Activated B cell treated with CpG ODN at 0.5 μM for 24 hours (primary cell): ENCODE measurements at regions of chr17 and their contacts with region 1.

Region 1: DNA sequence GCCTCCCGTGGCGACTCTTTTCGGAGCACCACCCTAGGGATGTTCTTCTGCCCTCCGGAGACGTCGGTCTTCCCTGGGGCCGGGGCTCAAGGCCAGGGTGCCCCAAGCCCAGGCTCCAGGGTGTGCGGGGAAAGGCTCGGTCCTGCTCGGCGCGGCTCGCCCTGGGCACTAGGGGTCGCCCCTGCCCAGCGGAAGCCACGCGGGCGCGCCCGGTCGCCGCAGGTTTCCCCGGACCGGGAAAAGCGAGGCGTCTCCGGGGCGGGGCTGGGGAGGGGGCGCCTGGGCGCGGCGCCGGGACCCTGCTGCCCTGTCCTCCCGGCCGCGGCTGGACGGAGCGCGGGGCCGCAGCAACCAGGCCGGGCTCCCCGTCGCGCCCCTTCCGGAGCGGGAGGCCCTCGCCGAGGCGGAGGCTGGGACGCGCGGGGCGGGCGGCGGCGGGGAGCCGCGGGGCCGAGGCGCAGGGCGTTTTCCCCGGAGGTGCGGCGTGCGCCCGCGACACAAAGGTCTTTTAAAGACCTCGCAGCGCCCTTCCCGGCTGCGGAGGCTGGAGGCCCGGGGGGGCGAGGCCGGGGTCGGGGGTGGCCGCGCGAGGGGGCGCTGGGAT is 76.4 kb downstream of the MRC2 start:
- DNase-seq: peak; percentile 81
- ATAC-seq: peak; percentile 95
- H3K4me3 Mint-ChIP-seq: peak overlapping the region; percentile 60
- H3K27ac Mint-ChIP-seq: no peak overlapping the region
- H3K4me1 Mint-ChIP-seq: peaks cover 10% of the 10 kb centered on the region
- H3K27me3 Mint-ChIP-seq: peaks cover 11% of the 10 kb centered on the region
- CTCF ChIP-seq: no peak

Region 2: GRCh38 chr17:62388856-62389255 is 315.0 kb before region 1 on chr17:
- CTCF ChIA-PET with region 1: no interaction called
- POLR2A ChIA-PET with region 1: no interaction called
- intact Hi-C with region 1: no loop called
- DNase-seq: no peak
- ATAC-seq: no peak
- H3K4me3 Mint-ChIP-seq: no peak overlapping the region
- H3K27ac Mint-ChIP-seq: no peak overlapping the region
- H3K4me1 Mint-ChIP-seq: no peaks in the 10 kb centered on the region
- H3K27me3 Mint-ChIP-seq: peaks cover 14% of the 10 kb centered on the region
- CTCF ChIP-seq: no peak

Region 3: DNA sequence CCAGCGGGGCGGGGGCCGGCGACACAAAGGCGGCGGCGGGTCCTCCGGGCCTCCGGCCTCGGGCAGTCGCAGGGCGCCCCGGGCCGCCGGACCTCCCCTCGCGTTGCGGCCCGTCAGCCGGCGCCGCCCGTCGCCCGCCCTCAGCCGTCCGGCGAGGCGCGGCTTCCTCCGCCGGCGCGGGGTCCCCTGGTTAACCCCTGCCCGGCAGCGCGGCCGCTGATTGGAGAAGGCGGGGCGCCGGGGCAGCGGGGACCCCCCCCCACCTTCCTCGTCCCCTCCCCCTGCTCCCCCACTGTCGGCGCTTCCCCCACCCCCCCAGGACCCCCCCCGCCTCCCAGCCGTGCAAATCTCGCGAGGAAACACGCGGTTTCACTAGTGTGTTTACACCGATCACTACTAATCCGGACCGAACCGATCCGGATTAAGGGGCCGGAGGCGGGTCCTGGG is 225.4 kb before region 1 on chr17 and contains the start of gene TLK2:
- CTCF ChIA-PET with region 1: no interaction called
- POLR2A ChIA-PET with region 1: no interaction called
- intact Hi-C with region 1: no loop called
- DNase-seq: peak; percentile 77
- ATAC-seq: peak; percentile 82
- H3K4me3 Mint-ChIP-seq: peak within 1 kb of the TSS; percentile 86
- H3K27ac Mint-ChIP-seq: peak within 1 kb of the TSS; percentile 90
- H3K4me1 Mint-ChIP-seq: peaks cover 39% of the 10 kb centered on the region
- H3K27me3 Mint-ChIP-seq: no peaks in the 10 kb centered on the region
- CTCF ChIP-seq: no peak
- total RNA-seq, gene TLK2: 54.6 and 57.0 TPM in 2 replicates

Region 4: DNA sequence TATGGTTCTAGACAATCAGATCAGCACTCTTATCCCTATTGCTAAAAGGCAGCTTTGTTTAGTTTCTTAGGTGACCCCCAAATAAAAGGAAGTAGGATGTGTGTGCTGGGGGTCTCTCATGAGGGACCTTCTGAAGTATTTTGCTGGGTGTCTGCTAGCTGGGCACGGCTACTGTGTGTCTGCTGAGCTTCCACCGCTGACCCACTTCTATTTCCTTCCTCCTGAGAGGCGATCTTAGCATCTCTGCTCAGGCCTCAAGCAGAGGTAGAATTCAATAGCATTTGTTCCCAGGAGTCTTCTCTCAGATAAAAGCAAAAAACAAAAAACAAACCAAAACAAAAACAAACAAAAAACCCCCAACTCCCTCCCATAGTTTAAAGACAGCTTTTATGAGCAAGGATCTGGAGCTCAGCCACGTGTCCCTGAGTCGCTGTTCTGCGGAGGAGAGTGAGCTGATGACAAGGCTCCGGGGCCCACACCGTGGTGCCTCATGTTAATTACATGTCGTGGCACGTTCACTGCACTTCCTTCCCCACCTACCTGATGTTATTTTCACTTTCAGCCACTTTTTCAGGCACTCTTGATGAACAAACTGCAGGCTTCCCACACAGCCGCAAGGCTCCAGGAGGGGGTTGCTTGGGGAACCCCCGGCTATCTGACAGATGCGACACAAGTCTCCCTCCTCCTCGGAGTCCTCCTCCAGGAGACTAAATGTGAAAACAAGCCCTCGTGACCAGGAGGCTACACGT is 20.7 kb after region 1 on chr17:
- CTCF ChIA-PET with region 1: interaction called, 4 read pairs
- POLR2A ChIA-PET with region 1: interaction called, 4 read pairs
- intact Hi-C with region 1: loop called (anchors 1 kb)
- DNase-seq: peak; percentile 46
- ATAC-seq: peak; percentile 92
- H3K4me3 Mint-ChIP-seq: peak overlapping the region; percentile 75
- H3K27ac Mint-ChIP-seq: peak overlapping the region; percentile 91
- H3K4me1 Mint-ChIP-seq: peaks cover 60% of the 10 kb centered on the region
- H3K27me3 Mint-ChIP-seq: peaks cover 3% of the 10 kb centered on the region
- CTCF ChIP-seq: no peak

Region 5: DNA sequence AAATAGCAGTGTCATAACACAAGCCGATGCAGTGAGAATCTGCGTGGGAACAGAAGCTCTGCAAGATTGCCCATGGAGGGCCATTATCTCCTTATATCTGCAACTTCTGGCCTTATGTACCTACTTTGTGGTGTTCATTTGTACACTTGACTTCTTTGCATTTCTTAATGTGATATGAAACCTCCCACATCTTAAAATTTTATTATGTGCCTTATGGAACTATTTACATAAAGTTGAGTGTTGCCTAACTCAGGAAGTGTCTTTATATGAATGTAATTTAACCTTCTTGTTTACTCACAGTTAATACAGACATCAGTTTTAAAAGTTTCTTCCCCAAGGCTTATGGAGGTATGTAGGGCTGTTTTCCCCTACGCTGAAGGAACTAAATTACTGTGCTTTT is 252.0 kb after region 1 on chr17:
- CTCF ChIA-PET with region 1: no interaction called
- POLR2A ChIA-PET with region 1: no interaction called
- intact Hi-C with region 1: no loop called
- DNase-seq: no peak
- ATAC-seq: no peak
- H3K4me3 Mint-ChIP-seq: no peak overlapping the region
- H3K27ac Mint-ChIP-seq: no peak overlapping the region
- H3K4me1 Mint-ChIP-seq: no peaks in the 10 kb centered on the region
- H3K27me3 Mint-ChIP-seq: no peaks in the 10 kb centered on the region
- CTCF ChIP-seq: no peak

Region 6: DNA sequence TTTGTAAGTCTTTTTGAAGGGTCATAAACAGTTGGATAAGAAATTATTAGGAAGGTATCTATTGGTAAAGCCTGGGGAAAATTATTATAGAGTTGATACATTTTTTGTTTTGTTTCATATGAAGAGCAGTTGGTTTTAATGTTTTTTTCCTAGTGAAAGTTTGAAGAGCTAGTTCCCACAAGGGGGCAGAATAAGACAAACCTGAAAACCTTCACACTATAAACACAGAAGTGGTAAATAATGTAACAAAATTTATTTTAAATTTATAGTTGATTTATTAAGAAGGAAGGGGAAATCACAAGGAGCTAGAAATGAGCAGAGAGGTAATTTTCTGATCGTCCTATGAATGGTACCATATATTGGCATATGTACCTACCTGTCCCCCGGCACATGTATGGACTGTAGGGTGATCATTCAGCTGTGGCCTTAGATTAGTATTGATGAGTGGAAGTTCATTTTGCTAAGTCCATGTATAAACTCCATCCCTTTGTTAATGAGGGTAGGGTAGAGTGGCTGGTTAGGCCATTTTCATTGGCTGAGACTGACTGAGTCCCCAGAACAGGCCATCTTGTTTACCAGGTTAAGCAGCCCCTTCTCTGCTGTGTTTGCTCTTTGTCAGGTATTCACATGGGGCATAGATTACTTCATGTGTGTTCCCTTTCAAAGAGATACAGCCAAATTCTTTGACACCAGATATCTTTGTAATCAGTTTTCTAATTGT is 378.6 kb after region 1 on chr17:
- CTCF ChIA-PET with region 1: no interaction called
- POLR2A ChIA-PET with region 1: no interaction called
- intact Hi-C with region 1: loop called (anchors 5 kb)
- DNase-seq: no peak
- ATAC-seq: no peak
- H3K4me3 Mint-ChIP-seq: no peak overlapping the region
- H3K27ac Mint-ChIP-seq: no peak overlapping the region
- H3K4me1 Mint-ChIP-seq: no peaks in the 10 kb centered on the region
- H3K27me3 Mint-ChIP-seq: no peaks in the 10 kb centered on the region
- CTCF ChIP-seq: no peak